ENCODE measurements at regions of chr4 and their contacts with region 1.

Region 1: DNA sequence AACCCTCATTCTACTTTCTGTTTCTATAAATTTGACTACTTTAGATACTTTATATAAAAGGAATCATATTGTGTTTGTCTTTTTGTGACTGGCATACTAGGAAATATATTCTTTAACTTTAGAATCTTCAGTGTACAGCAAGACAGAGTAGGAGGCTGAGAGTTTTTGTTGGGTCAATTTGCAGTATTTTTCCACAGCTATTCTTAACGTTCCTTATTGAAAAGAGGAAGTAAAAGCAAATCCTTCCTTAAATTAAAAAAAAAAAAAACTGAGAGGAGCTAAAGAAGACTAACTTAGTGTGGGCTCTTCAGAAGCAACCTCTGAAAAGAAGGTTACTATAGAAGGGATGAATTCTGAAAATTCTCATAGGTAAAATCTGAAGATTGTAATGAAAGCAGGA is 1194.6 kb downstream of the ADGRL3 start:
- DNase-seq: no peak
- ATAC-seq: no peak
- H3K4me3 ChIP-seq: no peak overlapping the region
- H3K27ac ChIP-seq: no peak overlapping the region
- H3K4me1 ChIP-seq: peaks cover 0 to 7% (median 0%) of the 10 kb centered on the region in 12 donors
- H3K27me3 ChIP-seq: no peaks in the 10 kb centered on the region
- CTCF ChIP-seq: no peak
- POLR2A ChIP-seq: no peak

Region 2: DNA sequence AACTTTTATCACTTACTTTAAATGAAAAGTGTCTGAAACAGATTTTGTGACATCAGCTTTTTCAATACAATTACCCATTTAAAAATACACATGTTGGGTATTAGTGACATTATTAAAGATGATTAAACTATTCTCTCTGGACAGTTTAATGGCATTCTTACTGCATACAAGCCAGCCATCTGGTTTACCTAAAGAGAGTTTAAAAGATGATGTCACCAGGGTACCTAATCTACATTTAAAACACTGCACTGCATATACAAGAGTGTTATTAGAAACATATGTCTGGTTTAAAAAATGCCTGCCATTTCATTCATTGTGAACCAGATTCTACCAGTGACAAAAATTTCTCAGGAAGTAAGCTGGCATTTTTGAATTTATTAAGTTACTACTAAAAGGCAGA is 275.6 kb before region 1 on chr4:
- intact Hi-C with region 1: loop called in 1 of 10 experiments (anchors 5 kb)
- DNase-seq: no peak
- ATAC-seq: no peak
- H3K4me3 ChIP-seq: no peak overlapping the region
- H3K27ac ChIP-seq: no peak overlapping the region
- H3K4me1 ChIP-seq: no peaks in the 10 kb centered on the region
- H3K27me3 ChIP-seq: no peaks in the 10 kb centered on the region
- CTCF ChIP-seq: no peak
- POLR2A ChIP-seq: no peak

Measured in heart left ventricle (tissue), 16 donors.